Mammary epithelial cell (primary cell): ENCODE measurements at regions of chr11 and their contacts with region 1.

Region 1: GRCh38 chr11:75525596-75526541 is at the start of gene GDPD5:
- DNase-seq: peak; percentile 77
- H3K4me3 ChIP-seq: peak within 1 kb of the TSS; percentile 75 to 79 (median 77)
- H3K27ac ChIP-seq: no peak within 1 kb of the TSS
- H3K4me1 ChIP-seq: peaks cover 10% of the 10 kb centered on the region
- H3K27me3 ChIP-seq: no peaks in the 10 kb centered on the region
- CTCF ChIP-seq: peak in 1 of 2 donors; percentile 59
- total RNA-seq, gene GDPD5: 9.5 to 13.3 TPM

Region 2: GRCh38 chr11:75280227-75280701 is 245.6 kb before region 1 on chr11:
- CTCF ChIA-PET with region 1: no interaction called
- dilution Hi-C with region 1: no loop called
- in situ Hi-C with region 1: loop called (anchors 10 to 25 kb)
- intact Hi-C with region 1: no loop called
- DNase-seq: peak; percentile 51
- H3K4me3 ChIP-seq: no peak overlapping the region
- H3K27ac ChIP-seq: no peak overlapping the region
- H3K4me1 ChIP-seq: no peaks in the 10 kb centered on the region
- H3K27me3 ChIP-seq: no peaks in the 10 kb centered on the region
- CTCF ChIP-seq: peak; percentile 95 to 98

Region 3: GRCh38 chr11:75437966-75438659 is 87.8 kb before region 1 on chr11:
- CTCF ChIA-PET with region 1: interaction called, 5 read pairs
- dilution Hi-C with region 1: loop called (anchors 5 kb)
- in situ Hi-C with region 1: no loop called
- intact Hi-C with region 1: no loop called
- DNase-seq: no peak
- H3K4me3 ChIP-seq: no peak overlapping the region
- H3K27ac ChIP-seq: no peak overlapping the region
- H3K4me1 ChIP-seq: peaks cover 8% of the 10 kb centered on the region
- H3K27me3 ChIP-seq: no peaks in the 10 kb centered on the region
- CTCF ChIP-seq: no peak

Region 4: GRCh38 chr11:75445315-75445953 is 80.4 kb before region 1 on chr11:
- CTCF ChIA-PET with region 1: interaction called, 5 read pairs
- dilution Hi-C with region 1: no loop called
- in situ Hi-C with region 1: loop called (anchors 5 kb)
- intact Hi-C with region 1: loop called (anchors 1 kb)
- DNase-seq: peak; percentile 27
- H3K4me3 ChIP-seq: no peak overlapping the region
- H3K27ac ChIP-seq: no peak overlapping the region
- H3K4me1 ChIP-seq: peaks cover 8% of the 10 kb centered on the region
- H3K27me3 ChIP-seq: no peaks in the 10 kb centered on the region
- CTCF ChIP-seq: peak; percentile 92 to 98

Region 5: DNA sequence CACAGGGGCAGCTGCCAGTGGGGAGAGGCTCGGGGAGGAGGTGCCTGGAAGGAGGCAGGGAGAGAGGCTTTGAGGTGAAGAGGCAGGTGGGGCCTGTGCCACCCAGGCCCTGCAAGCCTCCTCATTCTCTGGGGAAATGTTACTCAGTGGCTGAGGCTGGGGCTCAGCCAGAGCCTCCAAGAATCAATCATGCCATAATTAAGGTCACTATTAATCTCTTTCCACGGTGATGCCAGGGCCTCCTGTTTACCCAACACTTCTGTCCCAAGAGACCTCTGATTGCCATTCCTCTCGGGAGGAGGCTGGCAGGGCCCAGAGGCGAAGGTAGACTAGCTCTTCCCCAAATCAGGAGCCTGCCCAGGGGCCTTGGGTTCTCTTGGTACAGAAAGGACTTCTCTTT is 38.5 kb before region 1 on chr11:
- CTCF ChIA-PET with region 1: no interaction called
- dilution Hi-C with region 1: loop called (anchors 5 kb)
- in situ Hi-C with region 1: no loop called
- intact Hi-C with region 1: no loop called
- DNase-seq: no peak
- H3K4me3 ChIP-seq: no peak overlapping the region
- H3K27ac ChIP-seq: no peak overlapping the region
- H3K4me1 ChIP-seq: peaks cover 21% of the 10 kb centered on the region
- H3K27me3 ChIP-seq: no peaks in the 10 kb centered on the region
- CTCF ChIP-seq: no peak

Region 6: DNA sequence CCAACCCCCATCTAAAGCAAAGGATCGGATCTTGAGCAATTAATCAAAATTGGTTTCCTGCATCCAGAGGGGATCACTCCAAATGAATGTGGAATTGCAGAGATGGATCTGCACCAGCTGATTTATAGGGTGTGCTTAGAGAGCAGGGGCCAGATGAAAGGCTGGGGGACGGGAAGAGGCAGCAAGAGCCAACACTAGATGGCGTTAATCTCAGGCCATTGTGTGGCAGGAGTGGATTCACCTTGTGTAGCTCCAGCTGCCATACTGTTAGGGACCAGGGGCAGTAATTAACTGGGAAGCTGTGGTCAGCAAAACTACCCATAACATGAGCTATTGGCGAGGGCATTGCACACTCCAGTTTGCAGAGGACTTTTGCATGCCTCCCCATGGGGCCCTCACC is 71.8 kb after region 1 on chr11:
- CTCF ChIA-PET with region 1: no interaction called
- dilution Hi-C with region 1: loop called (anchors 5 kb)
- in situ Hi-C with region 1: no loop called
- intact Hi-C with region 1: no loop called
- DNase-seq: peak; percentile 24
- H3K4me3 ChIP-seq: no peak overlapping the region
- H3K27ac ChIP-seq: no peak overlapping the region
- H3K4me1 ChIP-seq: peaks cover under 1% of the 10 kb centered on the region
- H3K27me3 ChIP-seq: no peaks in the 10 kb centered on the region
- CTCF ChIP-seq: peak; percentile 70 to 73